ENCODE measurements at regions of chr9 and their contacts with region 1.

Region 1: DNA sequence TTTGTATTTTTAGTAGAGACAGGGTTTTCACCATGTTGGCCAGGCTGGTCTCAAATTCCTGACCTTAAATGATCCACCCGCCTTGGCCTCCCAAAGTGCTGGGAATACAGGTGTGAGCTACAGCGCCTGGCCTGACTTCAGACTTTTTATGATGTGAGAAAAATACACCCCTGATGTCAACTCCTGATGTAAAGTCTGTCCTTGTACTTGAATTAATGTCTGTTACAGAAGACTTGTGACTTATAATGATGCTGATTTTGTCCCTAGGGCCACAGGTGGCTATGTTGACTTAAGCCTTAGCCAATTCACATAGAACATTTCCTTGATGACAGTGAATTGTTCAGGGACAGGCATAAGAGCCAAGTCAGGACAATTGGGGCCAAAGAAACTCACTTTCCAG is 42.5 kb upstream of the MELK start:
- DNase-seq: no peak
- H3K4me3 ChIP-seq: no peak overlapping the region
- H3K27ac ChIP-seq: no peak overlapping the region
- H3K4me1 ChIP-seq: no peaks in the 10 kb centered on the region
- H3K27me3 ChIP-seq: no peaks in the 10 kb centered on the region
- CTCF ChIP-seq: no peak
- EP300 ChIP-seq: no peak
- POLR2A ChIP-seq: no peak
- RAD21 ChIP-seq: no peak

Region 2: GRCh38 chr9:36551129-36551528 is 20.9 kb after region 1 on chr9:
- CTCF ChIA-PET with region 1: interaction called, 10 read pairs
- POLR2A ChIA-PET with region 1: no interaction called
- DNase-seq: no peak
- H3K4me3 ChIP-seq: no peak overlapping the region
- H3K27ac ChIP-seq: no peak overlapping the region
- H3K4me1 ChIP-seq: no peaks in the 10 kb centered on the region; a peak in 1 of 7 replicates
- H3K27me3 ChIP-seq: no peaks in the 10 kb centered on the region
- CTCF ChIP-seq: no peak
- EP300 ChIP-seq: no peak
- POLR2A ChIP-seq: no peak
- RAD21 ChIP-seq: no peak

Measured in H1 (cell line).